ENCODE measurements at regions of chr1 and their contacts with region 1.

Region 1: GRCh38 chr1:6489799-6490180 is 1.7 kb downstream of the PLEKHG5 start:
- DNase-seq: no peak
- H3K4me3 ChIP-seq: peak overlapping the region; percentile 58
- H3K27me3 ChIP-seq: no peaks in the 10 kb centered on the region
- CTCF ChIP-seq: peak; percentile 97

Region 2: DNA sequence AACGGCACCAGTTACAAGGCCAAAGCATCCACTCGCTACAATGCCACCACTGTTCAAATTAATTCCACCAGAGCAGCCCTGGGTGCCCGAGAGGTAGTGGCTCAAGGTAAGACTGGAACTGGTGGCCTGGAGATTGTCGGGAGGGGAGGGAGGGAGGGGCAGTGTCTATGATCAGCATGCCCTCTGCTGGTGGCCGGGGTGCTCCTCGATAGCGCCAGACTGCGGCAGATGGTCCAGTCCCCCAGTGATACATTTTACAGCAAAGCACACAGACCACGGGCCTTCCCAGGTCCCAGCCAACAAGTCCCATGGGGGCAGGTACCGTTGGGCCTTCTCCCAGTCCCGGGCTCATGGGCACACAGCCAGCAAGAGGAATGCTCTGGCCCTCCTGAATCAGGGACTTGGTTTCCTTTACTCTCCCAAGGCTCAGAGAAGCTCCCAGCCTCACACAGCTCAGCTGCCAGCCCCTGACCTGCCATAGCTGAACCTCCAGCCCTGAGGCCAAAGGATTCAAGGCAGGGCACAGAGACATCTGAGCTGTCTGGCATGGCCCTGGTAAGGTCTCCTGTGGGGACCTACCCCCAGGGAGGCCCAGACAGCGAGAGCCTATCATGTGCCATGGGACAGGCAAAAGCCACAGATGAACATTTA is 111.6 kb before region 1 on chr1:
- CTCF ChIA-PET with region 1: no interaction called
- POLR2A ChIA-PET with region 1: no interaction called
- DNase-seq: no peak
- H3K4me3 ChIP-seq: no peak overlapping the region
- H3K27me3 ChIP-seq: no peaks in the 10 kb centered on the region
- CTCF ChIP-seq: peak; percentile 19; the same call in 1 of the 2 replicates

Region 3: DNA sequence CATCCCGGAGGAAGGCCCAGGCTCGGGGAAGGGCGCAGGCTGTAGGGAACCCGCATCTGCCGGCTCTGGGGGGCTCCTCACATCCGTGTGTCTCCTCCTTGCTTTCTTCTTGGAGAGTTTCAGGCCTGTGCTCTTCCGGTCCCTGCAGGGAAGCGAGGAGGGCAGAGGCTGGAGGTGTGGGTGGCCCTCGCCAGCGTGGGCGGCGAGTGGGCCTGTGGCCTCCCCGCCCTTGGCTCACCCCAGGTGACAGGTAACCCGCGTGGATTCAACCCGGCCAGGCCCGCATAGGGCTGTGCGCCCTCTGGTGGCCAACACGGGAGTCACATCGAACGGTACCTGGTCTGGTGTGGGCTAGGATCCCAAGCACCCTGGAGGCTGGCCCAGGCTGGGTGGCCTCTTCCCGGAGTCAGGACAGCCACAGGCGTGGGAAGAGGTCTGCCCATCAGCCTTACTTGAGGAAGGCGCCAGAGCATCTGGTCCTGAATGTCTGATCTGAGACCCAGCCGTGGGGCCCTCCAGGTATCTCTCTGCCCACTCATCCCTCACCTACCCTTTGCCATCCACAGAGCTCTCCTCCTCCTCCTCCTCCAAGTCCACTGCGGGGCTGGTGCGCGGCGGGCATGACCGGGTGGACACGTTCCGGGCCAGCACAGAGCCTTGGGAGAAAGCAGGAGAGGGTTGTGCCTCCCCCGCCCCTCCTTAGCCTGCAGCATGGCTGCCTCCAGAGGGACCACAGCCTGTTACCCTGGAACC is 14.2 kb before region 1 on chr1:
- CTCF ChIA-PET with region 1: interaction called, 58 read pairs
- POLR2A ChIA-PET with region 1: no interaction called
- DNase-seq: no peak
- H3K4me3 ChIP-seq: no peak overlapping the region
- H3K27me3 ChIP-seq: no peaks in the 10 kb centered on the region
- CTCF ChIP-seq: peak; percentile 93

Region 4: GRCh38 chr1:6500544-6501278 is 10.9 kb after region 1 on chr1:
- CTCF ChIA-PET with region 1: interaction called, 13 read pairs
- POLR2A ChIA-PET with region 1: no interaction called
- DNase-seq: no peak
- H3K4me3 ChIP-seq: no peak overlapping the region
- H3K27me3 ChIP-seq: no peaks in the 10 kb centered on the region
- CTCF ChIP-seq: no peak

Region 5: GRCh38 chr1:6523566-6523965 is 33.8 kb after region 1 on chr1:
- CTCF ChIA-PET with region 1: interaction called, 124 read pairs
- POLR2A ChIA-PET with region 1: no interaction called
- DNase-seq: no peak
- H3K4me3 ChIP-seq: no peak overlapping the region
- H3K27me3 ChIP-seq: no peaks in the 10 kb centered on the region
- CTCF ChIP-seq: peak; percentile 67

Region 6: DNA sequence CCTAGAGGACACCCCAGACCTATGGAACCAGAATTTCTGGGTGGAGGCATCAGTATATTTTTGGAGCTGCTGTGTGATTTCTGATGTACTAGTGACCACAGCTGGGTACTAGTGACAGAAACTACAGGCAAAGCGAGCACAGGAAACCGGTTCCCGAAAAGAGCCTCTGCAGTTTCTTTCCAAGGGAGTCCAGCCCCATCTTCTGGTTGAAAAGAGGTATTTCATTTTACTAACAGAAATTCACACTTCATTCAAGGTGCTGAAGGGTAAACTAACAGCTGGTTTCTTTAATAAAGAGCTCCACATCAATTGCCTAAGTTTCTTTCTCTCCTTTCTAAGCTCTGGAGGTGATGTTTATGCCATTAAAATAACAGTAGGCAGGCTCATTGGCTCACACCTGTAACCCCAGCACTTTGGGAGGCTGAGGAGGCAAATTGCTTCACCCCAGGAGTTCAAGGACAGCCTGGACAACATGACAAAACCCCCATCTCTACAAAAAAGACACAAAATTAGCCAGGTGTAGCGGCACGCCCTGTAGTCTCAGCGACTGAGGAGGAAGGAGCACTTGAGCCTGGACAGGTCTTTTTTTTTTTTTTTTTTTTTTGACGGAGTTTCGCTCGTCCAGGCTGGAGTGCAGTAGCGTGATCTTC is 156.8 kb after region 1 on chr1:
- CTCF ChIA-PET with region 1: interaction called, 21 read pairs
- POLR2A ChIA-PET with region 1: no interaction called
- DNase-seq: no peak
- H3K4me3 ChIP-seq: no peak overlapping the region
- H3K27me3 ChIP-seq: no peaks in the 10 kb centered on the region
- CTCF ChIP-seq: peak; percentile 61